Transverse colon (tissue), 4 donors: ENCODE measurements at regions of chr7 and their contacts with region 1.

Region 1: GRCh38 chr7:74401137-74401859 is 52.4 kb upstream of the GTF2IRD1 start:
- DNase-seq: peak; percentile 77
- H3K4me3 ChIP-seq: no peak overlapping the region
- H3K27ac ChIP-seq: no peak overlapping the region
- H3K4me1 ChIP-seq: no peaks in the 10 kb centered on the region
- H3K27me3 ChIP-seq: no peaks in the 10 kb centered on the region
- CTCF ChIP-seq: peak; percentile 92 to 99 (median 97)
- EP300 ChIP-seq: no peak
- POLR2A ChIP-seq: no peak

Region 2: GRCh38 chr7:74061840-74062539 is 339.3 kb before region 1 on chr7:
- in situ Hi-C with region 1: loop called in 2 of 4 experiments (anchors 25 kb)
- intact Hi-C with region 1: loop called (anchors 5 kb)
- DNase-seq: peak; percentile 89
- H3K4me3 ChIP-seq: peak overlapping the region in 1 of 4 donors; percentile 22
- H3K27ac ChIP-seq: peak overlapping the region; percentile 79 to 90 (median 84)
- H3K4me1 ChIP-seq: peaks cover 14 to 39% (median 30%) of the 10 kb centered on the region in 4 donors
- H3K27me3 ChIP-seq: no peaks in the 10 kb centered on the region
- CTCF ChIP-seq: no peak
- EP300 ChIP-seq: no peak
- POLR2A ChIP-seq: peak; percentile 69

Region 3: GRCh38 chr7:74206589-74207120 is 194.6 kb before region 1 on chr7:
- in situ Hi-C with region 1: loop called in 3 of 4 experiments (anchors 5 to 10 kb)
- intact Hi-C with region 1: loop called (anchors 2 kb)
- DNase-seq: peak; percentile 92
- H3K4me3 ChIP-seq: peak overlapping the region in 2 of 4 donors; percentile 17 to 47
- H3K27ac ChIP-seq: no peak overlapping the region
- H3K4me1 ChIP-seq: peaks cover 4 to 34% (median 13%) of the 10 kb centered on the region in 4 donors
- H3K27me3 ChIP-seq: peaks cover 8% of the 10 kb centered on the region
- CTCF ChIP-seq: peak; percentile 97 to 99 (median 98)
- EP300 ChIP-seq: no peak
- POLR2A ChIP-seq: no peak

Region 4: DNA sequence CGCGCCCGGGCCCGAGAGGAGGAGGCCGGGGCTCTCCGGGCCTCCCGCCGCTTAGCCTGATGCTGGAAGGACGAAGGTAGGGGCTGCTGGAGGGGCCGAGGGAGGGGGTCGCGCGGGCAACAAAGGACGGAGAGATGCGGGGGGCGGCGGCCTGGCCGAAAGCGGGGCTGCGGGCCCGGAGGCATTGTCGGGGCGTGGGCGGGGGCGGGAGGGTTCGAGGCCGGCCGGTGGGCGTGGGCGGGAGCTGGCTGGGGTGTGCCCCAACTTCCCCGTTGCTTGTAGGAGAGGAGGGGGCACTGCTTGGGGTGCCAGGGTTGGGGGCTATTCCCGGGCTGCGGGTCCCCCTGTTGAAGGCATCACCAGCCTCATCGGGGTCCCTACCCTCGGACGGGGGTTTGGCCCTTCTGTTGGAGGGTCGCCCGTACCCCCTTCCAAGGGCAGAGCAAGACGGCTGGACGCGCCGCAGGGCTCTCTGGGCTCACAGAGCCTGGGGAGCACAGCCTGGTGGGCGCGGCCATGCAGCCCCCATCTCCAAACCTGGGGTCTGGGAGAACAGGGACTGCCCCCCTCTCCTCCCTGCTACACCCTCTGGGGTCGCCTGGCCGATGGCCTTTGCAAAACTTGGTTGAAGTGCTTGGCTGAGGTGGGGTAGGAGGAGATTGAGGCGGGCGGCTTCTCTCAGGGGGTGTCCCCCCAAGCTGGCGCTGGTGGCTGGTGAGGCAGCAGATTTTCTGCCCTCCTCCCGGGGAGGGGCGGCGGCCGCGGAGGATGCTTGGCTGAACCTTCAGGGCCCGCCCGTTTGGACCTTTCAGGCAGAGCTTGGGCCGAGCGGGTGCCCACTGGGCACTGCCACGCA is 111.4 kb before region 1 on chr7:
- in situ Hi-C with region 1: no loop called
- intact Hi-C with region 1: loop called (anchors 10 kb)
- DNase-seq: peak; percentile 66
- H3K4me3 ChIP-seq: peak overlapping the region; percentile 58 to 93 (median 78)
- H3K27ac ChIP-seq: peak overlapping the region; percentile 87 to 94 (median 91)
- H3K4me1 ChIP-seq: peaks cover 29 to 86% (median 78%) of the 10 kb centered on the region in 4 donors
- H3K27me3 ChIP-seq: no peaks in the 10 kb centered on the region
- CTCF ChIP-seq: no peak
- EP300 ChIP-seq: no peak
- POLR2A ChIP-seq: no peak

Region 5: DNA sequence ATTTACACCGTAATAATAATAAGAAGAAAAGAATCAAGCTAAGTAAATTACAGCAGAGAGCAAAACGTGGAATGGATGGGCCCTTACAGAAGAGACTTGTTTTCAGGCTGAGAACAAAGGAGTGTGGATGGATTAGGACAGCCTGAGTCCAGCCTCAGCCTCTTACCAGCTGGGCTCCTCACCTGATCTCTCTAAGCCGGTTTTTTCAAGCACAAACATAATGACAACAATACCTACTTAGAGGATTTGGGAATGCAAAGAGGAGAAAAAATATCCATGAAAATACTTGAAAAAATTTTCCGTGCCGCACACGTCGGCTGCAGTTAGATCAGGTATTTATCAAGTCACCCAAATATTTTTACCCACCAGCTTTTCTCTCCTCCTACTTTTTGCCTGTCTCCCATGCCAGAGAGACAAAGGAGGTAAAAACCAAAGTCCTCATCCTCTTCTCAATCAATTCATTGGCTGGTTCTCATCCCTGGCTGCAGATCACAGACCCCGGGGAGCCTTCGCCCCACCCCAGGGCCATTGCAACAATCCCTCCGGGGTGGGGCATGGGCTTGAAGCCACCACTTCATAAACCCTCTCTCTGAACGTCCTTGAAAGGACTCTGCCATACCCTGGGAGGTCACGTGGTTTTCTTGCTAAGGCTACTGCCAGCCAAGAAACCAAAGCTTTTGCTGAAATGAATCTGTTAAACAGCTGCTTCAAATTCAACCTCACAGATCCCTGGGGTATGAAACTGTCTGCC is 226.5 kb after region 1 on chr7:
- in situ Hi-C with region 1: no loop called
- intact Hi-C with region 1: no loop called
- DNase-seq: peak; percentile 66
- H3K4me3 ChIP-seq: no peak overlapping the region
- H3K27ac ChIP-seq: peak overlapping the region; percentile 15 to 43 (median 36)
- H3K4me1 ChIP-seq: peaks cover 0 to 11% (median 9%) of the 10 kb centered on the region in 4 donors
- H3K27me3 ChIP-seq: no peaks in the 10 kb centered on the region
- CTCF ChIP-seq: no peak
- EP300 ChIP-seq: no peak
- POLR2A ChIP-seq: no peak

Region 6: GRCh38 chr7:75033050-75033449 is 631.8 kb after region 1 on chr7:
- in situ Hi-C with region 1: loop called in 1 of 4 experiments (anchors 25 kb)
- intact Hi-C with region 1: no loop called
- DNase-seq: no peak
- H3K4me3 ChIP-seq: no peak overlapping the region
- H3K27ac ChIP-seq: no peak overlapping the region
- H3K4me1 ChIP-seq: no peaks in the 10 kb centered on the region
- H3K27me3 ChIP-seq: no peaks in the 10 kb centered on the region
- CTCF ChIP-seq: no peak
- EP300 ChIP-seq: no peak
- POLR2A ChIP-seq: no peak